B cell (primary cell): ENCODE measurements at regions of chr17 and their contacts with region 1.

Region 1: DNA sequence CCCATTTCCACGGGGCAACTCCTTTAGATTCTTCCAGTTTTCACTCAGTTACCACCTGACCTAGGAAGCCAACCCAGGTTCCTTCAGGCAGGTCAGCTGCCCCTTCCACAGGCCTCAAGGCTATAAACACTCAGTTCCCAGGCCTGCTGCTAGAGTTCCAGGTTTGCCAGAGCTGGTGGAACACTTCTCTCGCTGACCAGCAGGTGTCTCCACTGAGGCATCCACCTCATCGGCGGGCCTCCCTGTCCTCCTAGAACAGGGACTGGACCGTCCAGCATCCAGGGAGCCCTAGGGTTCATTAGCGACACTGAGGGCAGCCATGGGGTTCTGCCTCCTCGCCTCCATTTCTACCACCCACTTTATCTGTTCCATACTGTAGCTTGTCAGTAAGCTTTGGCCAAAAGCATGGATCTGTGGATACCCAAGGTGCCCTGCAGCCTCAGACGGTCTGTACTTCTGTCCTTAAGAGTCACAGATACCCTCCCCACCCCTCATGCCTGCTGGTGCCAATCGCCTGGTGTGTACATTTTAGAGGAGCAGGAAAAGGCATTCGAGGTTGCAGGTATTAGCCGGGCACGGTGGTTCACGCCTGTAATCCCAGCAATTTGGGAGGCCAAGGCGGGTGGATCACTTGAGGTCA is 29.0 kb downstream of the PIMREG start:
- DNase-seq: peak; percentile 74
- ATAC-seq: peak; percentile 74
- H3K4me3 ChIP-seq: no peak overlapping the region
- H3K4me3 Mint-ChIP-seq: no peak overlapping the region
- H3K27ac ChIP-seq: no peak overlapping the region
- H3K27ac Mint-ChIP-seq: no peak overlapping the region
- H3K4me1 ChIP-seq: peaks cover 0 to 2% of the 10 kb centered on the region in 2 donors
- H3K4me1 Mint-ChIP-seq: peaks cover 4% of the 10 kb centered on the region
- H3K27me3 ChIP-seq: no peaks in the 10 kb centered on the region
- H3K27me3 Mint-ChIP-seq: peaks cover 11% of the 10 kb centered on the region
- CTCF ChIP-seq: peak; percentile 98

Region 2: DNA sequence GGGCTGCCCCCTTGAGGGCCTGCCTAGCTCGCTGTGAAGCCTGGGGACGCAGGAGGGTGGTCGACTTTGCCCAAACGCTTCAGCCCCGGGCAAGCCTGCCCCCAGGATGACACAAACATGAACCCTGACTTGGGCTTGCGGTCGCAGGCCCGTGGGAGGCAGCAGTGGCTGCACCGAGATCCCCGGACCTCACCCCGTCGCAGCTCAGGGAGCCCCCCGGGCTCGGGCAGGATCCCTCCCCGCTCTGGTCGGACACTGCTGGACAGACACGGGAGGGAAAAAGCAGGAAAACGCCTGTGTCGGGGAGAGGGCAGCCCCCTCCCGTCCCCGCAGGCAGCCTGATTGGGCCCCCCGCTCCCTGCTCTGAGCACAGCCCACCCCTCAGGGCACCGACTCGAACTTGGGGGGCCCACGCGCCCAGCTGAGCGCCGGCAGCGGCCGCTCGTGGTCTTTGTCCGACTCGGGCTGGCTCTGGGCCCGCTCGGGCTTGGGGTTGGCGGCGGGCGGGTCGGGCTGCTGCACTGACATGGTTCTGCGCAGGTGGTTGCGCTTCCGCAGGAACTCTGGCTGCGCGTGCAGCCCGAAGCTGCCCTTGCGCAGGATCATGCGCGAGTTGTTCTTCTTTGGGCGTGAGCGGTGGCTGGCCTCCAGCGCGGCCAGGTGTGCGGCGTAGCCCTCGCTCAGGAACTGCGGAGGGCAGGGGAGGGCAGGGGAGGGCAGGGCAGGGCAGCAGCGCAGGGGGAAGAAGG is 18.1 kb before region 1 on chr17:
- CTCF ChIA-PET with region 1: interaction called, 13 read pairs
- POLR2A ChIA-PET with region 1: no interaction called
- intact Hi-C with region 1: no loop called
- DNase-seq: peak; percentile 87
- ATAC-seq: peak; percentile 93
- H3K4me3 ChIP-seq: peak overlapping the region in 4 of 5 experiments; percentile 2 to 38 (median 28)
- H3K4me3 Mint-ChIP-seq: peak overlapping the region; percentile 54
- H3K27ac ChIP-seq: peak overlapping the region; percentile 65 to 71
- H3K27ac Mint-ChIP-seq: peak overlapping the region; percentile 75
- H3K4me1 ChIP-seq: peaks cover 6 to 10% of the 10 kb centered on the region in 2 donors
- H3K4me1 Mint-ChIP-seq: peaks cover 37% of the 10 kb centered on the region
- H3K27me3 ChIP-seq: no peaks in the 10 kb centered on the region
- H3K27me3 Mint-ChIP-seq: no peaks in the 10 kb centered on the region
- CTCF ChIP-seq: no peak

Region 3: GRCh38 chr17:6599364-6599763 is 126.1 kb after region 1 on chr17:
- CTCF ChIA-PET with region 1: interaction called, 12 read pairs
- POLR2A ChIA-PET with region 1: no interaction called
- intact Hi-C with region 1: loop called (anchors 5 kb)
- DNase-seq: peak; percentile 55
- ATAC-seq: peak; percentile 41
- H3K4me3 ChIP-seq: no peak overlapping the region
- H3K4me3 Mint-ChIP-seq: no peak overlapping the region
- H3K27ac ChIP-seq: no peak overlapping the region
- H3K27ac Mint-ChIP-seq: peak overlapping the region; percentile 71
- H3K4me1 ChIP-seq: peaks cover 11 to 12% of the 10 kb centered on the region in 2 donors
- H3K4me1 Mint-ChIP-seq: peaks cover 14% of the 10 kb centered on the region
- H3K27me3 ChIP-seq: no peaks in the 10 kb centered on the region
- H3K27me3 Mint-ChIP-seq: no peaks in the 10 kb centered on the region
- CTCF ChIP-seq: no peak

Region 4: DNA sequence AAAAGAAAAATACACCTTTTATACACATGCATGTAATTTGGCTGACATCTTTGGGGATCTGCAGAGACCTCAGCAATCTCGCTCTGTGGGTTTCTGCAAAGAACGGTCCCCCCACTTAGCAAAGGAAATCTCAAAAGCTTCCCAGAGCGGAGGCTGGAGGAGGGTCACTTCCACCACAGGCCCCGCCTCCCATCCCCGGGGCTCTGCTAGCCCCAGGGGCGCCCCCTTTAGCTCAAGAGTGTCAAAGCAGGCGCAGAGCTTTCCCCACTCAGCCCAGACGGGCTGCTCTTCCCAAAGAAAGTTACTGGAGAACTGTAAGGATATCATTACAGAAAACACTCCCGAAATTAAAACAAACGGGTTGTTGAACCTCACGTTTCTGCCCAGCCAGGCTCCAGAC is 228.5 kb after region 1 on chr17:
- CTCF ChIA-PET with region 1: interaction called, 24 read pairs
- POLR2A ChIA-PET with region 1: no interaction called
- intact Hi-C with region 1: loop called (anchors 5 kb)
- DNase-seq: peak; percentile 34
- ATAC-seq: peak; percentile 57
- H3K4me3 ChIP-seq: no peak overlapping the region
- H3K4me3 Mint-ChIP-seq: no peak overlapping the region
- H3K27ac ChIP-seq: no peak overlapping the region
- H3K27ac Mint-ChIP-seq: no peak overlapping the region
- H3K4me1 ChIP-seq: no peaks in the 10 kb centered on the region
- H3K4me1 Mint-ChIP-seq: peaks cover 3% of the 10 kb centered on the region
- H3K27me3 ChIP-seq: peaks cover 0 to 3% (median 1%) of the 10 kb centered on the region in 4 experiments
- H3K27me3 Mint-ChIP-seq: peaks cover 21% of the 10 kb centered on the region
- CTCF ChIP-seq: peak; percentile 37